B cell (primary cell): ENCODE measurements at regions of chr12 and their contacts with region 1.

Region 1: DNA sequence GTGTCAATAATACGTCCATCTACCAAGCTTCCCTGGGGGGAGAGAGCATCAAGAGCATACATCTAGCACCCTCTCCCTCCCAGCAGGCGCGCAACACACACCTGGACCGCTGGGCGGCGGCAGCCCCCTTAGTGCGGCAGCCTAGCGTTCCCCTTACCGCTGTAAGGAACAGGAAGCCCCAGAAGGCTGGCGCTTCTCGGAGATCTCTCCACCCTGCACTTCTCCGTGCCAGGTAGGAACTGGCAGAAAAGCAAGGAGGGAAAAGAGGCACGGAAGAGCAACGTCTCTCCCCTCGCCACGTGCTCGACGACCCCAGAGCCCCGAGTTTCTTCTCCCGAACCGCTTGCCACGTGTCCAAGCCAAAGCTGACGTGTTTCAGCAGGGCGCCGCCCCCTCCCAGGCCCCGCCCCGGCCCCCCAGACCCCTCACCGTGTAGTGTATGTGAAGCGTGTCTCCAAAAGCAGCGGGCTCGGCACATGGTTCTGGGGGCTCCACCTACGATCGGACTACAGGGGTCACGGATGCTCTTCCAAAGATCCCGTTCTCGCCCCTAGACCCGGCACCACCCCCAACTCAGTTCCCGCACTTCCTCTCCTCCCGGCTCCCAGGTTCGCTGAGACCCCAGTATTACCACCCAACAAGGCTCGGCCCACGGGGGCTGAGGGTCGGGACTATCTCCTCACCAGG is 532 bp downstream of the FKBP11 start:
- DNase-seq: peak; percentile 88
- ATAC-seq: peak; percentile 82
- H3K4me3 ChIP-seq: peak overlapping the region; percentile 70 to 100 (median 84)
- H3K4me3 Mint-ChIP-seq: peak overlapping the region; percentile 98
- H3K27ac ChIP-seq: peak overlapping the region; percentile 88 to 94
- H3K27ac Mint-ChIP-seq: peak overlapping the region; percentile 95
- H3K4me1 ChIP-seq: peaks cover 10 to 12% of the 10 kb centered on the region in 2 donors
- H3K4me1 Mint-ChIP-seq: peaks cover 14% of the 10 kb centered on the region
- H3K27me3 ChIP-seq: no peaks in the 10 kb centered on the region
- H3K27me3 Mint-ChIP-seq: no peaks in the 10 kb centered on the region
- CTCF ChIP-seq: peak; percentile 86

Region 2: GRCh38 chr12:48936379-48936979 is 11.7 kb after region 1 on chr12:
- CTCF ChIA-PET with region 1: interaction called, 104 read pairs
- POLR2A ChIA-PET with region 1: interaction called, 5 read pairs
- intact Hi-C with region 1: loop called (anchors 1 kb)
- DNase-seq: peak; percentile 81
- ATAC-seq: peak; percentile 57
- H3K4me3 ChIP-seq: no peak overlapping the region
- H3K4me3 Mint-ChIP-seq: no peak overlapping the region
- H3K27ac ChIP-seq: no peak overlapping the region
- H3K27ac Mint-ChIP-seq: peak overlapping the region; percentile 4
- H3K4me1 ChIP-seq: peaks cover 16 to 34% of the 10 kb centered on the region in 2 donors
- H3K4me1 Mint-ChIP-seq: peaks cover 37% of the 10 kb centered on the region
- H3K27me3 ChIP-seq: no peaks in the 10 kb centered on the region
- H3K27me3 Mint-ChIP-seq: no peaks in the 10 kb centered on the region
- CTCF ChIP-seq: peak; percentile 97

Region 3: GRCh38 chr12:48977315-48978281 is 52.8 kb after region 1 on chr12:
- CTCF ChIA-PET with region 1: interaction called, 65 read pairs
- POLR2A ChIA-PET with region 1: interaction called, 6 read pairs
- intact Hi-C with region 1: loop called (anchors 1 kb)
- DNase-seq: peak; percentile 90
- ATAC-seq: peak; percentile 69
- H3K4me3 ChIP-seq: peak overlapping the region in 3 of 5 experiments; percentile 60 to 86 (median 65)
- H3K4me3 Mint-ChIP-seq: peak overlapping the region; percentile 72
- H3K27ac ChIP-seq: no peak overlapping the region
- H3K27ac Mint-ChIP-seq: peak overlapping the region; percentile 73
- H3K4me1 ChIP-seq: peaks cover 55 to 56% of the 10 kb centered on the region in 2 donors
- H3K4me1 Mint-ChIP-seq: peaks cover 57% of the 10 kb centered on the region
- H3K27me3 ChIP-seq: peaks cover 2 to 90% (median 54%) of the 10 kb centered on the region in 4 experiments
- H3K27me3 Mint-ChIP-seq: peaks cover 74% of the 10 kb centered on the region
- CTCF ChIP-seq: peak; percentile 92

Region 4: DNA sequence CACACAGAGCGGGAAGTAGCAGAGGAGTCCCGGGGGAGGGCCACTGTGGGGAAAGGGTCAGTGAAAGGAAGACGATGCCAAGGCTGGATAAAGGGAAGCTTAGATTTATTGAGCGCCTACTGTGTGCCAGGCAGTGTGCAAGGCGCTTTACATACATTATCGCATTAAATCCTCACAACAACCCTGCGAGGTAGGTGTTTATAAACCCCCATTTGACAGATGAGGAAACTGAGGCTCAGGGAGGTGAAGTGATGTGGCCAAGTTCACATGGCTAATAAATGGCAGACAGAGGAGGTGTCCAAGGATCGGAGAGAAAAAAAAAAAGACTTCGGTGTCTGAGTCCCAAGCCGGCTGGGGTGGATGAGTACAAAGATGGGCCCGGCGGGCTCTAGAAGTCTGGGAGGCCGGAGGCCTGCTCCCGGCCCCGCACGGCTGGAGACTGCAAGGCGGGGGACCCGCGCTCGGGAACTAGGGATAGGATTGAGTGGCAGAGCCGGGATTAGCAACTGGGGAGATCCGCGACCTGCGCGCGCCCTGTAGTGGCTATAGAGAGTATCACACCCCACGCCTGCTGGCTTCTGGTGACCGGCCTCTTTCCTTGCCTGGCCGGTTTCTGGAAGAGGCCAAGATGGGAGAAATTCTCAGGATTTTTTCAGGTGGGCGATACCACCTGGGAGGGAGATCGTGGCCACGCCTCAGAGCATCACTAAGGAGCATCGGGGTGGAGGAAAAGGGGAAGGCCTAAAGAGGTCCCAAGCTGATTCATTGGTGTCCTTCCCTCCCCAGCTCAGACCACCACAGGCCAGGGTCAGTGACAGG is 70.5 kb after region 1 on chr12:
- CTCF ChIA-PET with region 1: interaction called, 21 read pairs
- POLR2A ChIA-PET with region 1: no interaction called
- intact Hi-C with region 1: no loop called
- DNase-seq: peak; percentile 72
- ATAC-seq: peak; percentile 26
- H3K4me3 ChIP-seq: peak overlapping the region in 1 of 5 experiments; percentile 23
- H3K4me3 Mint-ChIP-seq: peak overlapping the region; percentile 59
- H3K27ac ChIP-seq: no peak overlapping the region
- H3K27ac Mint-ChIP-seq: no peak overlapping the region
- H3K4me1 ChIP-seq: peaks cover 37 to 44% of the 10 kb centered on the region in 2 donors
- H3K4me1 Mint-ChIP-seq: peaks cover 40% of the 10 kb centered on the region
- H3K27me3 ChIP-seq: peaks cover 0 to 72% (median 33%) of the 10 kb centered on the region in 4 experiments
- H3K27me3 Mint-ChIP-seq: peaks cover 32% of the 10 kb centered on the region
- CTCF ChIP-seq: peak; percentile 86

Region 5: DNA sequence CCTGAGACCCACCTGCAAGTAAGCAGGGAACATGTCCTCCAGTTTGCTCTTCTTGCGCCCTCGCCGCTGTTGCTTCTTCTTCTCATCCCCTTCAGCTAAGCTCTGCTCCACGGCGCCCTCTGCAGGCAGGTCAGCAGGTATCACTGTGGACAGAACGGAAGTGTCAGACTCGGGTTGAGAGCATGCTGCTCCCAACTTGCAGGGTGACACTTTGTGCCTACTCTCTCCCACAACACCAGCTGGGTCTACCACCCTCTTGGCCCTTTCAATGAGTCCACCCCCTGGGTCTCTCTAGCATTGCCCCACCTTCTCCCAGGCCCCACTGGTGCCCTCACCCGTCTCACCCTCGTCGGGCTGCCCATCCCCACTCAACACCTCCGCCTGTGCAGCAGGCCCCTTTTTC is 119.1 kb after region 1 on chr12:
- CTCF ChIA-PET with region 1: interaction called, 14 read pairs
- POLR2A ChIA-PET with region 1: no interaction called
- intact Hi-C with region 1: no loop called
- DNase-seq: peak; percentile 79
- ATAC-seq: peak; percentile 78
- H3K4me3 ChIP-seq: no peak overlapping the region
- H3K4me3 Mint-ChIP-seq: no peak overlapping the region
- H3K27ac ChIP-seq: no peak overlapping the region
- H3K27ac Mint-ChIP-seq: peak overlapping the region; percentile 3
- H3K4me1 ChIP-seq: no peaks in the 10 kb centered on the region
- H3K4me1 Mint-ChIP-seq: peaks cover 2% of the 10 kb centered on the region
- H3K27me3 ChIP-seq: no peaks in the 10 kb centered on the region
- H3K27me3 Mint-ChIP-seq: no peaks in the 10 kb centered on the region
- CTCF ChIP-seq: peak; percentile 80

Region 6: DNA sequence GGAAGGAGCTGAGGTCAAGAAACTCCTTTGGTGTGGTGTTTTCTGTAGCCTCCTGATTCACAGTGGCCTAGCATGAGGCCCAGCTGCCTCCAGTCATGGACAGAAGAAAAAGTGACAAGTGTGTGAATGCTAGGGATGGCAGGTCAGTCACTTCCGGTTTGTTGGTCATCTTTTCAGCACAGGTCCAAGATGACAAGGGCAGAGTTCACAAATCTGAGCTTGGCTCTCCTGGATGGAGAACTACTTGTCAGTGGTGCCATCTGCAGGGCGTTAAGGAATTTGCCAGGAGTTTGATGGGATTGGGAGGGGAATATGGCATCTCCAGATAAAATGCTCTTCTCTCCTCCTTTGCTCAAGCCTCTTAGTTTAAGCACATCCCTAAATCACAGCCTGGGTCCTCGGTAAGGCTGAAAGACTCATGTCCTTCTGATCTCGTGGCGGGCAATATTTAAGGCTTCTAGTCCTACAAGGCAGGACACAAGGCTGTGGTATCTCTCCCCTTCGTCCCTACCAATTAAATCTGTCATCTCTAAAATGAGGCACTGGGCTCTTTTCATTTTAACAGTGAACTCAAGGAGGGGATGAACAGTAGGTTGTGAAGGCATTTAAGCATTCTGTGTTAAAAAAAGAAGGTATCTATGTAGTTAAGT is 196.4 kb after region 1 on chr12:
- CTCF ChIA-PET with region 1: no interaction called
- POLR2A ChIA-PET with region 1: no interaction called
- intact Hi-C with region 1: no loop called
- DNase-seq: no peak
- ATAC-seq: no peak
- H3K4me3 ChIP-seq: no peak overlapping the region
- H3K4me3 Mint-ChIP-seq: no peak overlapping the region
- H3K27ac ChIP-seq: no peak overlapping the region
- H3K27ac Mint-ChIP-seq: no peak overlapping the region
- H3K4me1 ChIP-seq: no peaks in the 10 kb centered on the region
- H3K4me1 Mint-ChIP-seq: no peaks in the 10 kb centered on the region
- H3K27me3 ChIP-seq: no peaks in the 10 kb centered on the region
- H3K27me3 Mint-ChIP-seq: no peaks in the 10 kb centered on the region
- CTCF ChIP-seq: no peak